ENCODE measurements at regions of chr4 and their contacts with region 1.

Region 1: GRCh38 chr4:151117371-151117962 is 18.0 kb downstream of the RPS3A start:
- DNase-seq: peak; percentile 73
- H3K4me3 Mint-ChIP-seq: no peak overlapping the region
- H3K27ac Mint-ChIP-seq: no peak overlapping the region
- H3K4me1 Mint-ChIP-seq: peaks cover 11% of the 10 kb centered on the region
- H3K27me3 Mint-ChIP-seq: no peaks in the 10 kb centered on the region

Region 2: GRCh38 chr4:151276787-151277562 is 159.5 kb after region 1 on chr4 and contains the start of gene PRSS48:
- CTCF ChIA-PET with region 1: interaction called, 10 read pairs
- POLR2A ChIA-PET with region 1: no interaction called
- intact Hi-C with region 1: loop called (anchors 2 kb)
- DNase-seq: peak; percentile 67
- H3K4me3 Mint-ChIP-seq: no peak within 1 kb of the TSS
- H3K27ac Mint-ChIP-seq: no peak within 1 kb of the TSS
- H3K4me1 Mint-ChIP-seq: no peaks in the 10 kb centered on the region
- H3K27me3 Mint-ChIP-seq: peaks cover 1% of the 10 kb centered on the region
- total RNA-seq, gene PRSS48: not detected

Region 3: DNA sequence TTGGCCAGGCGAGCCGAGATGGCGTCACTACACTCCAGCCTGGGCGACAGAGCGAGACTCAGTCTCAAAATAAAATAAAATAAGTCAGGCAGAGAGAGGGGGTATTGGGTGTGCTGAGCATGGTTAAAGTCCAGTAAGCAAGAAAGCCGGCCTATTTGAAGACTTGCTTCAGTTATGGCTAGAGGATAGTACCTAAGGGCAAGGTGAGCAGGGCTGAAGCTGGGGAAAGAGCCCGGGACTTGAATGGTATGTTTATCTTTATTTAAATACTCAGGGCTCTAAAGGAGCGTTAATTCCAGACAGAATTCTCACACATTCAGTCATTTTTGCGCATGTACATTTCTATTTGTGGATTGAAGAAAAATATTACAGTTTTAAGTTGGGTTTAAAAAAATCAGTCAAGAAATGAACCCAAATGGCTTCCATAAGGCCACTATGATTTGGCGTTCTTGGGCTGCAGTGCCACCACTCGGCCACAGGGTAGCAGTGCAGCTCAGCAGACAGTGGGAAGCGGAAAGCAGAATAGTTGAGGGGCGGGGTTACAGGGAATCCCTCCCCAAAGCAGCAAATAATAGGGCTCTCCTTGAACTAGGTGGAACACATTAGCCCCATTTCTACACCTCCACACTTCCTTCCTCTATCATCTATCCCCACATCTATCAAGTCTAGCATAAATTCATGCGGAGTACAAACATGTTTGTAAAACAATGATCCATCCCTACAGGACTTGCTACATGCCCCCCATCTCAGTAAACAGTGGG is 245.1 kb after region 1 on chr4:
- CTCF ChIA-PET with region 1: interaction called, 7 read pairs
- POLR2A ChIA-PET with region 1: no interaction called
- intact Hi-C with region 1: loop called (anchors 1 kb)
- DNase-seq: peak; percentile 86
- H3K4me3 Mint-ChIP-seq: no peak overlapping the region
- H3K27ac Mint-ChIP-seq: no peak overlapping the region
- H3K4me1 Mint-ChIP-seq: peaks cover 2% of the 10 kb centered on the region
- H3K27me3 Mint-ChIP-seq: no peaks in the 10 kb centered on the region

Region 4: GRCh38 chr4:151604238-151604637 is 486.8 kb after region 1 on chr4:
- CTCF ChIA-PET with region 1: no interaction called
- POLR2A ChIA-PET with region 1: no interaction called
- intact Hi-C with region 1: loop called (anchors 5 kb)
- DNase-seq: no peak
- H3K4me3 Mint-ChIP-seq: no peak overlapping the region
- H3K27ac Mint-ChIP-seq: no peak overlapping the region
- H3K4me1 Mint-ChIP-seq: no peaks in the 10 kb centered on the region
- H3K27me3 Mint-ChIP-seq: no peaks in the 10 kb centered on the region